ENCODE measurements at regions of chr17 and their contacts with region 1.

Region 1: DNA sequence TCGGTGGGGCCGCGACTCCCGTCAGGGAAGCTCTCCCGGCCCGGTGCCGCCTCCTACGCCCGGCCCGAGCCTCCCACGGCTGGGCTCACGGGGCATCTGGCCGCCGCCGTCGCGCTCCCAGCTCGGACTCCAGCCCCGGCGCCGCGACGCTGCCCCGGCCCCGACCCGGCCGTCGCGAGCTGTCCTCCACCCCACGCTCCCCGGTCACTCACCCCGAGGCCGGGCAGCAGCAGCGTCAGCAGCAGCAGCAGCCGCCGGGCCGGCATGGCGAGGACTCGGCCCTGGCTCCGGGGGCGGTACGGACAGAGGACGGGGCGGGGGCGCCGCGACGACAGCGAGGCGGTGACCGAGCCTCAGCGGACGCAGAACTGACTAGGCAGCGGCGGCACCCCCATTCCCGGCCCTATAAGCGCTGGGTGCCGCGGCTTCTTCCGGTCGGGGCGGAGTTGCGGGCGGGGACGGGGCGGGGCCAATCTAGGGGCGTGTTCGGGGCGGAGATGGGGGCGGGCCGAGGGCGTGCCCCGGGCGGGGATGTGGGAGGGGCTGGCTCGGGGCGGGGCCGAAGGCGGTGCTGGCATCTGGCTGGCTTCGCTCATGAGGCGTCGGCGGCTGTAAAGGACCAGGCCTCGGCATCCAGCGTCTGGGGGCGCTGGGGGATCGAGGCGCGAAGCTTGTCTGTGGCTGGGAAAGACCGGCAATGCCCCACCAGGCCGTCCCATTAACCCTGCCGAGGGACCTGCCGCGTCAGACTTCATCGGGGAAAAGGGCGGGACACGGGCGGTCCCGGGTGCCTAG is at the start of gene ERN1:
- DNase-seq: peak; percentile 95
- H3K4me3 ChIP-seq: peak within 1 kb of the TSS; percentile 77 to 97 (median 90)
- H3K27ac ChIP-seq: peak within 1 kb of the TSS; percentile 98 to 100 (median 100)
- H3K4me1 ChIP-seq: peaks cover 11 to 36% (median 20%) of the 10 kb centered on the region in 4 donors
- H3K27me3 ChIP-seq: no peaks in the 10 kb centered on the region
- CTCF ChIP-seq: no peak
- EP300 ChIP-seq: no peak
- POLR2A ChIP-seq: peak; percentile 91
- total RNA-seq, gene ERN1: 7.8 to 29.2 (median 12.8) TPM

Region 2: GRCh38 chr17:63919311-63919723 is 210.6 kb before region 1 on chr17:
- in situ Hi-C with region 1: loop called in 3 of 4 experiments (anchors 10 to 25 kb)
- intact Hi-C with region 1: no loop called
- DNase-seq: peak; percentile 69
- H3K4me3 ChIP-seq: no peak overlapping the region
- H3K27ac ChIP-seq: no peak overlapping the region
- H3K4me1 ChIP-seq: no peaks in the 10 kb centered on the region
- H3K27me3 ChIP-seq: no peaks in the 10 kb centered on the region
- CTCF ChIP-seq: peak; percentile 94 to 98 (median 95)
- EP300 ChIP-seq: no peak
- POLR2A ChIP-seq: no peak

Region 3: GRCh38 chr17:64025732-64026294 is 104.1 kb before region 1 on chr17:
- in situ Hi-C with region 1: loop called in 2 of 4 experiments (anchors 10 kb)
- intact Hi-C with region 1: loop called (anchors 2 kb)
- DNase-seq: peak; percentile 87
- H3K4me3 ChIP-seq: peak overlapping the region in 2 of 4 donors; percentile 12 to 17
- H3K27ac ChIP-seq: peak overlapping the region in 1 of 4 donors; percentile 29
- H3K4me1 ChIP-seq: peaks cover 0 to 10% (median 3%) of the 10 kb centered on the region in 4 donors
- H3K27me3 ChIP-seq: no peaks in the 10 kb centered on the region
- CTCF ChIP-seq: peak; percentile 91 to 95 (median 94)
- EP300 ChIP-seq: no peak
- POLR2A ChIP-seq: no peak

Region 4: DNA sequence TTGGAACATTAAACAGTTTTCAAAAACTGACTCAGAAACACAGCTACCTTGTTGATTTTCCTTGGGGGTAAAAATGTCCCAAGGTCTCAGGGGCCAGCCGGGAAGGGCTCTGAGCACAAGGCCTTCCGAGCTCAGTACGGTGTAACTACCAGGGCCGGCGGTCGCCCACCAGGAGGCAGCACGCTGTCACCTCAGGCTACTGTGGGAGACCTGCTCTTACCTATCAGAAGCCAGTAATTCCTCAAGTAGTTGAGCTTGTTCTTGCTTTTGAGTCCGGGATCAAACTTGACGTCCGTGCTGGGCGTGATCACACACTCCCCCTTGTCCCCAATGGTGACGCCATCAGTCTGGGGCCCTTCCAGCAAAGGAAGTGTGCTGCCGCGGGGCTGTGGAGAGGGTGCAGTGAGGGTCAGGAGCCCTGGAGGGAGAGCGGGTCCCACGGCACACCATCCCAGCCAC is 66.2 kb before region 1 on chr17:
- in situ Hi-C with region 1: loop called in 2 of 4 experiments (anchors 10 kb)
- intact Hi-C with region 1: loop called (anchors 10 kb)
- DNase-seq: peak; percentile 76
- H3K4me3 ChIP-seq: peak overlapping the region in 1 of 4 donors; percentile 9
- H3K27ac ChIP-seq: peak overlapping the region; percentile 1 to 72 (median 46)
- H3K4me1 ChIP-seq: peaks cover 0 to 16% (median 6%) of the 10 kb centered on the region in 4 donors
- H3K27me3 ChIP-seq: no peaks in the 10 kb centered on the region
- CTCF ChIP-seq: peak; percentile 40 to 76 (median 61)
- EP300 ChIP-seq: no peak
- POLR2A ChIP-seq: no peak

Region 5: DNA sequence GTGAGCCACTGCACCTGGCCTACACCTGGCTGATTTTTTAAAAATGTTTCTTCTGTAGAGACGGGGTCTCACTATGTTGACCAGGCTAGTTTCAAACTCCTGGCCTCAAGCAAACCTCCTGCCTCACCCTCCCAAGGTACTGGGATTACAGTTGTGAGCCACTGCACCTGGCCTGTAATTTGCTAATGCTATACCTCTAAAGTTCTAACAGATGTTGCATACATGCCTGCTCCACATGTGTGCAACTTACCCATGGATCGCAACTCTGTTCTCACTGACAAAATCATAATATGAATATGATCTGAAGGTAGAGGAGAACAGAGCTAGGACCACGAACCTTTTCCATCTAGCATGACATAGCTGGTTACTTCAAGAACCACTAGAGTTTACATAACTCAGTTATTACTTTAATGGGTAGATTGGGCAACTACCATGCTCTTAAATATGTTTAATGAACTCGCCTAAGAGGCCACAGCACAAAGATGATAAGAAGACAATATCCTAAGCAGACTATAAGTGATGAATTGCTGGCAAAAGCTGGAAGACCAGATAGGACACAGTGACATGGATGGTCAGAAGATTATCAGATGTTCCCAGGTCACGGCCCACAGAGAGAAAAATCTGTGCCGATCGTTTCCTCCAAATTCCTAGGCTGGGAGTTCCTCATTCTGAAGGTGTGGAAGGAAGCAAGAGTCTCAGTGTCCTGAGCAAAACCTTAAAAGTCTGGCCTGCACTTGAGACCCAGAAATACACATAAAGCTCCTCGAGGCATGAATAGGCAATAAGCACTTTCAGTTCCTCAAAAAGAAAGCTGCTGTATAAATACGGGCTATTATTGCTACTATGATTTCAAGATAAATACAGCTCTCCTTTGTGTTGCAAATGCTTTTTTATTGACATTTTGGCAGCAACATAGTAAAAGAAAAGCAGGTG is 55.9 kb before region 1 on chr17:
- in situ Hi-C with region 1: loop called in 3 of 4 experiments (anchors 10 kb)
- intact Hi-C with region 1: loop called (anchors 10 kb)
- DNase-seq: no peak
- H3K4me3 ChIP-seq: no peak overlapping the region
- H3K27ac ChIP-seq: peak overlapping the region; percentile 31 to 64 (median 49)
- H3K4me1 ChIP-seq: peaks cover 0 to 15% (median 4%) of the 10 kb centered on the region in 4 donors
- H3K27me3 ChIP-seq: no peaks in the 10 kb centered on the region
- CTCF ChIP-seq: no peak
- EP300 ChIP-seq: no peak
- POLR2A ChIP-seq: no peak

Region 6: GRCh38 chr17:64385187-64386083 is 255.5 kb after region 1 on chr17:
- in situ Hi-C with region 1: no loop called
- intact Hi-C with region 1: no loop called
- DNase-seq: peak; percentile 48
- H3K4me3 ChIP-seq: no peak overlapping the region
- H3K27ac ChIP-seq: peak overlapping the region; percentile 47 to 71 (median 52)
- H3K4me1 ChIP-seq: peaks cover 0 to 5% (median 0%) of the 10 kb centered on the region in 4 donors
- H3K27me3 ChIP-seq: no peaks in the 10 kb centered on the region
- CTCF ChIP-seq: no peak
- EP300 ChIP-seq: no peak
- POLR2A ChIP-seq: no peak

Measured in transverse colon (tissue), 4 donors.